Aorta (tissue), 5 donors: ENCODE measurements at regions of chr7 and their contacts with region 1.

Region 1: GRCh38 chr7:1193593-1194424 is 33.8 kb upstream of the ZFAND2A start:
- DNase-seq: peak in 1 of 2 donors; percentile 54
- ATAC-seq: peak; percentile 74
- H3K4me3 ChIP-seq: no peak overlapping the region
- H3K27ac ChIP-seq: no peak overlapping the region
- H3K4me1 ChIP-seq: no peaks in the 10 kb centered on the region
- H3K27me3 ChIP-seq: no peaks in the 10 kb centered on the region

Region 2: GRCh38 chr7:1412322-1413261 is 218.8 kb after region 1 on chr7:
- intact Hi-C with region 1: loop called in 1 of 2 experiments (anchors 5 kb)
- DNase-seq: peak; percentile 87 to 94
- ATAC-seq: peak; percentile 74
- H3K4me3 ChIP-seq: no peak overlapping the region
- H3K27ac ChIP-seq: no peak overlapping the region
- H3K4me1 ChIP-seq: no peaks in the 10 kb centered on the region
- H3K27me3 ChIP-seq: peaks cover 0 to 3% of the 10 kb centered on the region in 2 donors

Region 3: DNA sequence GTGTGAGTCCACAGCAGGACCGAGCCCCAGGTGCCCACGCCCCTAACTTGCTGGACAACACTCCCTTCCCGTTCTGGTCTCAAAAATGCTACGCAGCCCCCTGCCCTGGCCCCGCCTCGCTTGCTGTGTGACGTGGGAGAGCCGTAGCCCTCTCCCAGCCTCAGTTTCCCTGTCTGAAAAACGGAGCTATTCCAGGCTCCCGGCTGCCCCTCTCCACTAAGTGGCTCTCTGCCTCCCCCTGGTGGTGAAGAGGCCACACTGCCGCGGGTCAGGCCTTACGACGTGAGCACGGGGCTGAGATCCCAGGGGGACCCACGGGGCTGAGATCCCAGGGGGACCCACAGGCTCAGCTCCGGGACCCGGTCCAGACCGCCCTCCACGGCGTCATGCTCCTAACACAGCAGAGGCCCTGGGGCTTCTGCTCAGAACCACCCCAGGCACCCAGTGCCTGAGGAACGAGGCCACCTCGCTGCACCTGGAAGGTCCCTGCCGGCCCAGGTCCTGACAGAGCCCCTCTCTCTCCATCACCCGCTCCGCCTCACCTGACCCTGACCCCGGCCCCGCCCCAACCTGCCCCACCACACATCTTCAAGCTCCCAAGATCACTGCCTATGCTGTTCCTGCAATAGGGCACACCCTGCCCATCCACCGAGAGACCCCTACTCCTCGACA is 238.7 kb after region 1 on chr7:
- intact Hi-C with region 1: loop called in 1 of 2 experiments (anchors 2 kb)
- DNase-seq: peak; percentile 79 to 95
- ATAC-seq: peak; percentile 80
- H3K4me3 ChIP-seq: no peak overlapping the region
- H3K27ac ChIP-seq: no peak overlapping the region
- H3K4me1 ChIP-seq: no peaks in the 10 kb centered on the region
- H3K27me3 ChIP-seq: no peaks in the 10 kb centered on the region

Region 4: DNA sequence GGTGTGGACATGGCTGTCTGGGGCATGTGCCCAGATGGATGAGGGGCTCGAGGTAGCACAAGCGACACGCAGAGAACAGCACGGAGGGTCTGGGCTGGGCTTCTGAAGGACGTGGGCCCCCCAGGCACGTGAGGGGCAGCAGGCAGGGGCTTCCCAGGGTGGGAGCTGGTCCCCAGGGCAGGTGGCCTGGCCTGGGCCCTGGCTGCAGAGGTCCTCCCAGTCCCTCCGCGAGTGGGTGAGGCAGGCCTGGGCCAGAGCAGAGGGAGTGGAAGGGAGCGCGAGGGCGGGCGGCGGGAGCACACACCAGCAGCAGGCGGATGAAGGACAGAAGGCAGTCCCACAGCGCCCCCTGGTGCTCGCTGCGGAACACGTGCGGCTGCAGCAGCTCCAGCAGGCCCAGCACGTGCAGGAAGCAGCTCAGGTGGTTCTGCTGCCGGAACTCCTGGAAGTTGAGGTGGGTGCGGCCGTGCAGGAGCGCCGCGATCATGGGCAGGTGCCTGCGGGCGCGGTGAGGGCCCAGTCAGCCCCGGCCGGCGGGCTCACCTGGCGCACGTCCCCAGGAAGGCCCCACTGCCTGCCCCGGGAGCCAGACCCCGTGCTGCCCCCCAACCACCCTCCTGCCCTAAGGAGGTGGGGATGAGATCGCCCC is 280.2 kb after region 1 on chr7:
- intact Hi-C with region 1: loop called (anchors 5 kb)
- DNase-seq: peak; percentile 92 to 97
- ATAC-seq: peak; percentile 81
- H3K4me3 ChIP-seq: no peak overlapping the region
- H3K27ac ChIP-seq: no peak overlapping the region
- H3K4me1 ChIP-seq: no peaks in the 10 kb centered on the region
- H3K27me3 ChIP-seq: no peaks in the 10 kb centered on the region